Caco-2 (cell line): ENCODE measurements at regions of chr11 and their contacts with region 1.

Region 1: DNA sequence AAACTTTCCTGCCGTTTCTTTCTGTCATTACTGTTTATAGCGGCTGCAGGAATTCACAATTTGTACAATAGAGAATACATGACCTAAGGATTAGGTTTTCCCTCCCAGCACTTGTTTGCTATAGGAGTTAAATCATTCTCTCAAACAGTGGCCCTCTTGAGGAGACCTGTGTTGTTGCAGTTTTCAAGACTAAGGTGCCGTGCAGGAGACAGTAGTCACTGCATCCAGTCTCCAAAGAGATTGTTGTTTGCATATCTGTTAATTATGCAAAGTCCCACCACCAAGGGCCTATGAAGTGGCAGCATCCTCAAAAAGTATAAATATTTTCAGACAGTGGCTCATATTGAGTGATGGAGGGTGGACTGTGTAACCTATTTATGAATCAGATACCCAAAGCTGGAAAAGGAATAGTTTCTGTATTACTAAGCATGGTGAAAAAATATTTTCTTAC is 2.3 kb downstream of the PRSS23 start:
- DNase-seq: peak; percentile 80
- H3K4me3 ChIP-seq: peak overlapping the region; percentile 89
- H3K4me3 Mint-ChIP-seq: peak overlapping the region; percentile 95
- H3K27ac Mint-ChIP-seq: peak overlapping the region; percentile 99
- H3K4me1 ChIP-seq: peaks cover 81% of the 10 kb centered on the region
- H3K4me1 Mint-ChIP-seq: peaks cover 71% of the 10 kb centered on the region
- H3K27me3 ChIP-seq: no peaks in the 10 kb centered on the region
- H3K27me3 Mint-ChIP-seq: no peaks in the 10 kb centered on the region
- CTCF ChIP-seq: peak; percentile 80 to 92

Region 2: GRCh38 chr11:86456052-86456939 is 346.3 kb before region 1 on chr11:
- CTCF ChIA-PET with region 1: interaction called, 5 read pairs
- POLR2A ChIA-PET with region 1: no interaction called
- intact Hi-C with region 1: loop called (anchors 1 kb)
- DNase-seq: peak; percentile 91 to 93
- H3K4me3 ChIP-seq: no peak overlapping the region
- H3K4me3 Mint-ChIP-seq: no peak overlapping the region
- H3K27ac Mint-ChIP-seq: peak overlapping the region; percentile 65
- H3K4me1 ChIP-seq: peaks cover 29% of the 10 kb centered on the region
- H3K4me1 Mint-ChIP-seq: peaks cover 41% of the 10 kb centered on the region
- H3K27me3 ChIP-seq: no peaks in the 10 kb centered on the region
- H3K27me3 Mint-ChIP-seq: no peaks in the 10 kb centered on the region
- CTCF ChIP-seq: peak; percentile 98

Region 3: DNA sequence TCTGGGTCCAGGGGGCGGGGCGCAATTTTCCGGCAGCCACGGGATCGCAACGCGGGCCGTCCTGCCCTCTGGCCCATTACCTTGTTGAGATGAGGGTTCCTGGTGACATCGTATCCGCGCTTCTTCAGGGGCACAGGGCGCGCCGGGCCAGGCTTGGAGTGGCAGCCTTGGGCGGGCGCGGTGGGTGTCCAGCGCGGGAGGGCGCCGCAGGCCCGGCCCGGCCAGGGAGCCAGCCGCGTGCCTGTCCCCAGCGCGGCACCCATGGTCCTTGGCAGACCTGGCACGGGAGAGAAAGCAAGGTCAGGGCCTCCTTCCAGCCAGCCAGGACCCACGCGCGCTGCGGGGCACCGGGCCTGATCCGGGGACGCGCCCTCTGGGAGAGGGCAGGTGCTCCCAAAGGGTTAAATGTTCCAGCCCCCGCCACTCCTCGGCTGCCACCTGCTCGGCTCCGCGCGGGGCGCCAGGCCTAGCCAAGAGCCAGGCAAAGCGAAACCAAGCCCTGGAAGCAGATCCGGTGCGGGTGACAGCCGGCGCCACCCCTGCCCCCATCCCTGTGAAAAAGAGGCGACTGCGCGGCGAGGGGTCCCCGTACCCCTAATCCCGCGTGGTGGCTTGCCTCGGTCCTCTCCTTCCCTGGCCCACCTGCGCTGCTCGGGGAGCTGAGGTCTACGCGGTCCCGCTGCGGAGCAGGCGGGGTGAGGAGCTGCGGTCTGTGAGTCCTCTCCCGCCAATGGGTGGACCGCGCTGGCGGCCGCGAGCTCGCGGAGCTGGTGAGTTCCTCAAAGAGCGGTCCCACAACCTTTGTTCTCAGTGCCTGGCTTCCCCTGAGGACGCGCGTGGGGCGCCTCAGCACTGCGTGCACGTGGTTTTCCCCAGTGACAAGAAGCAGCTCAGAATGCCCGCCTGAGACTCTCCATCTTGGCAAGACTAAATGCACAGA is 130.7 kb before region 1 on chr11 and contains the start of gene ME3:
- CTCF ChIA-PET with region 1: interaction called, 3 read pairs
- POLR2A ChIA-PET with region 1: interaction called, 14 read pairs
- intact Hi-C with region 1: loop called (anchors 1 kb)
- DNase-seq: peak; percentile 87 to 90
- H3K4me3 ChIP-seq: peak within 1 kb of the TSS; percentile 95
- H3K4me3 Mint-ChIP-seq: peak within 1 kb of the TSS; percentile 84
- H3K27ac Mint-ChIP-seq: peak within 1 kb of the TSS; percentile 87
- H3K4me1 ChIP-seq: peaks cover 50% of the 10 kb centered on the region
- H3K4me1 Mint-ChIP-seq: peaks cover 76% of the 10 kb centered on the region
- H3K27me3 ChIP-seq: no peaks in the 10 kb centered on the region
- H3K27me3 Mint-ChIP-seq: no peaks in the 10 kb centered on the region
- CTCF ChIP-seq: peak; percentile 8 to 31
- total RNA-seq, gene ME3: 32.8 and 36.9 TPM in 2 replicates

Region 4: GRCh38 chr11:86719781-86720463 is 82.7 kb before region 1 on chr11:
- CTCF ChIA-PET with region 1: no interaction called
- POLR2A ChIA-PET with region 1: no interaction called
- intact Hi-C with region 1: loop called (anchors 1 kb)
- DNase-seq: no peak
- H3K4me3 ChIP-seq: no peak overlapping the region
- H3K4me3 Mint-ChIP-seq: peak overlapping the region; percentile 2
- H3K27ac Mint-ChIP-seq: peak overlapping the region; percentile 81
- H3K4me1 ChIP-seq: peaks cover 47% of the 10 kb centered on the region
- H3K4me1 Mint-ChIP-seq: peaks cover 41% of the 10 kb centered on the region
- H3K27me3 ChIP-seq: no peaks in the 10 kb centered on the region
- H3K27me3 Mint-ChIP-seq: no peaks in the 10 kb centered on the region
- CTCF ChIP-seq: no peak

Region 5: GRCh38 chr11:86740709-86741483 is 61.7 kb before region 1 on chr11:
- CTCF ChIA-PET with region 1: interaction called, 3 read pairs
- POLR2A ChIA-PET with region 1: interaction called, 10 read pairs
- intact Hi-C with region 1: loop called (anchors 2 kb)
- DNase-seq: peak; percentile 81 to 82
- H3K4me3 ChIP-seq: no peak overlapping the region
- H3K4me3 Mint-ChIP-seq: peak overlapping the region; percentile 18
- H3K27ac Mint-ChIP-seq: peak overlapping the region; percentile 97
- H3K4me1 ChIP-seq: peaks cover 83% of the 10 kb centered on the region
- H3K4me1 Mint-ChIP-seq: peaks cover 80% of the 10 kb centered on the region
- H3K27me3 ChIP-seq: no peaks in the 10 kb centered on the region
- H3K27me3 Mint-ChIP-seq: no peaks in the 10 kb centered on the region
- CTCF ChIP-seq: no peak

Region 6: DNA sequence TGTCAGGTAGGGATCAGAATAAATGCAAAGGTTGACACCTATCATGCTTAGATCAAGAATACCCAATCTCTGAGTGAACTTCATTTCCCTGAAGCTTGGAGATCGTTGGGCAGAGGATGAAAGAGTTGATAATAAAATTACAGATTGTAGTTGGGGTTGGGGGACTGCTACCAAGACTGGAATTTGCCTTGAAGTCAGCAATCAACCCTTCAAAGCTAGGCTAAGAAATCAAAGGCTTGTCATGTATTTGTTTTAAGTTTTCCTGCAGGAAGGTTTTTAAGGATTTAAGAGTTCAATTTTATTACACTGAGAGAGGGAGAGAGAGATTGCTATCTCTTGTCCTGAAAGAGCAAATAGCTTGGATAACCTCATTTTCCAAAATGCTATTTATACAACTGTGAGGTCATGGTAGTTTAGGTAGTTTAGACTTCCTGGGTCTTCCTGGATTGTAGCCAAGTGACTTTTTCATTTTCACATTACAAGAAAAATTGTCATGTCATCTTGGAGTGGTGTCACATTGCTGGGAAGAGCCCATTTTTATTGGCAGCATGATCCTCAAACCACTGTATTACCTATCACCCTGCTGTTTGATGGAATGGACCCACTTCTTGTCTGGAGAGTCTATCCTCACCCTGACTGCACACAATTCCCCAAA is 12.4 kb before region 1 on chr11:
- CTCF ChIA-PET with region 1: interaction called, 8 read pairs
- POLR2A ChIA-PET with region 1: interaction called, 15 read pairs
- intact Hi-C with region 1: loop called (anchors 1 kb)
- DNase-seq: peak; percentile 65 to 72
- H3K4me3 ChIP-seq: no peak overlapping the region
- H3K4me3 Mint-ChIP-seq: peak overlapping the region; percentile 30
- H3K27ac Mint-ChIP-seq: peak overlapping the region; percentile 79
- H3K4me1 ChIP-seq: peaks cover 88% of the 10 kb centered on the region
- H3K4me1 Mint-ChIP-seq: peaks cover 75% of the 10 kb centered on the region
- H3K27me3 ChIP-seq: no peaks in the 10 kb centered on the region
- H3K27me3 Mint-ChIP-seq: no peaks in the 10 kb centered on the region
- CTCF ChIP-seq: no peak